Activated T-helper 1 cell treated with anti-CD3 and anti-CD28 coated beads, Interleukin-12 subunit alpha, Interleukin-12 subunit beta, Interleukin-2, Interleukin-4 antibody, amounts not matched to agents 30 ng/mL and 10 ng/mL and 1 ng/mL, durations not matched to agents 14 hours and 24 hours and 36 hours (primary cell): ENCODE measurements at regions of chr12 and their contacts with region 1.

Region 1: GRCh38 chr12:8890313-8891085 is 23.8 kb upstream of the PHC1 start:
- DNase-seq: peak; percentile 45
- H3K4me3 Mint-ChIP-seq: peak overlapping the region; percentile 72
- H3K27ac Mint-ChIP-seq: no peak overlapping the region
- H3K4me1 Mint-ChIP-seq: peaks cover 6% of the 10 kb centered on the region
- H3K27me3 Mint-ChIP-seq: peaks cover 13% of the 10 kb centered on the region

Region 2: DNA sequence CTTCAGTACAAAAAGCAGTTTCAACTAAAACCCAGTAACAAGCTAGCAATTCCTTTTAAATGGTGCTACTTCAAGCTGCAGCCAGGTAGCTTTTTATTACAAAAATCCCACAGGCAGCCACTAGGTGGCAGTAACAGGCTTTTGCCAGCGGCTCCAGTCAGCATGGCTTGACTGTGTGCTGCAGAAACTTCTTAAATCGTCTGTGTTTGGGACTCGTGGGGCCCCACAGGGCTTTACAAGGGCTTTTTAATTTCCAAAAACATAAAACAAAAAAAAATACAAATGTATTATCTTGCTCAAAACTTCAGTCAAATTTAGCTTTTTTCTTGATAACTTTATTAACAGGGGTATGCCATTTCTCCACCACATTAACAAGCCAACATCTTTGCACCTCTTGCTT is 346.2 kb before region 1 on chr12:
- intact Hi-C with region 1: loop called (anchors 1 kb)
- DNase-seq: peak; percentile 54
- H3K4me3 Mint-ChIP-seq: no peak overlapping the region
- H3K27ac Mint-ChIP-seq: no peak overlapping the region
- H3K4me1 Mint-ChIP-seq: no peaks in the 10 kb centered on the region
- H3K27me3 Mint-ChIP-seq: peaks cover 44% of the 10 kb centered on the region

Region 3: DNA sequence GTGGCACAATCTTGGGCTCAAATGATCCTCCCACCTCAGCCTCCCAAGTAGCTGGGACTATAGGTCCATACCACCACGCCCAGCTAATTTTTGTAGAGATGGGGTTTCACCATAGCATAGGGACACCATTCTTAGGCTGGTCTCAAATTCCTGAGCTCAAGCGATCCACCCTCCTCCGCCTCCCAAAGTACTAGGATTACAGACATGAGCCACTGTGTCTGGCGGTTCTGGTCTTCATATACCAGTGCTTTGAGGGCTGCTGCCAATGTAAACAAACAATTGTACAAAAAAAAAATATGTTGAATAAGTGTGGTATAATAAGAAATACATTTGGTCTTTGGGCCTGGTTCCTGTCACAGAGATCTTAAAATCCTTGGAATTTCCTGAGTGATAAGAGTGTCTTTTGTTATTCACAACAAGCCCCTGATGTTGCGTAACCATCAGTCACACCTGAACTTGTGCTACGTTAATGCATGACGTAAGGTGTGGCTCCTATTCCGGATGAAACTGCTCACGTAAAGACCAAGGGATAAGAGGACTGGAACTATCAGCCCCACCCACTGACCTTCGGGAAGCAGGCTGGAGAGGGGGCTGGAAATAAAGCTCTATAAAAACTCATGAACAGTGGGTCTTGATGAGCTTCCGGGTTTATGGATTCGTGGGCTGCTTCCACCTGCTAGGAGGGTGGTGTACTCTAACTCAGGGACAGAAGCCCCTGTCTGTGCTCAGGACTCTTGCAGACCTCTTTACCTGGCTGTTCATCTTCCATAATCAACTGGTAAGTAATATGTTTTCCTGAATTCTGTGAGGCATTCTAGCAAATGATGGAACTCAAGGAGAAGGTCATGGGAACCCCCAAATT is 209.2 kb before region 1 on chr12:
- intact Hi-C with region 1: loop called (anchors 1 kb)
- DNase-seq: no peak
- H3K4me3 Mint-ChIP-seq: no peak overlapping the region
- H3K27ac Mint-ChIP-seq: no peak overlapping the region
- H3K4me1 Mint-ChIP-seq: no peaks in the 10 kb centered on the region
- H3K27me3 Mint-ChIP-seq: peaks cover 12% of the 10 kb centered on the region

Region 4: GRCh38 chr12:8780389-8780788 is 110.1 kb before region 1 on chr12:
- intact Hi-C with region 1: loop called (anchors 1 kb)
- DNase-seq: no peak
- H3K4me3 Mint-ChIP-seq: no peak overlapping the region
- H3K27ac Mint-ChIP-seq: no peak overlapping the region
- H3K4me1 Mint-ChIP-seq: no peaks in the 10 kb centered on the region
- H3K27me3 Mint-ChIP-seq: no peaks in the 10 kb centered on the region

Region 5: DNA sequence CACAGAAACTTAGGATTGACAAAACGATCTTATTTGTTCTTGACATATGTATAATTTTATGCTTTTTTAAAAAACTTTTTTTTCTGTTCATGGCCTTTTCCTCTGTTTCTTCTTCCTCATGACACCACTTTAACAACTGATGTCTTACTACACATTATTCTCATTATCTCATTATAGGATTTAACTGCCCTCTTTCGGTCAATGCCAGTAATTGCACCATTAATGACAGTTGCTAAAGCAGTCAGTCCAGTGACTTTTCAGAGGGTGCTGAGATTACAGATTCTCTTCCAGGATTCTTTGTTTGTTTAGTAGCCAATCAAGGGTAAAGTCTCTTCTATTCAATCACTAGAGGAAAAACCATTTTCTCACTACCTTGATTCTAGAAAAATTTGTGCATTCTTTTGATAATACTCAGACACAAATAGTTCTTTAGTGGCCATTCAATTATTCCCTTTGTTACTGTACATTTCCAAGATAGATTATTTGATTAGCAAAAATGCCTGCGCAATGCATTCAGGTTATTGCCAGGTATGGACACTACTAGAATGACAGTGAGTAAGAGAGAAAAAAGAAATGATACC is 149.0 kb after region 1 on chr12:
- intact Hi-C with region 1: loop called (anchors 2 kb)
- DNase-seq: no peak
- H3K4me3 Mint-ChIP-seq: no peak overlapping the region
- H3K27ac Mint-ChIP-seq: no peak overlapping the region
- H3K4me1 Mint-ChIP-seq: peaks cover 30% of the 10 kb centered on the region
- H3K27me3 Mint-ChIP-seq: peaks cover 12% of the 10 kb centered on the region